ENCODE measurements at regions of chr10 and their contacts with region 1.

Region 1: DNA sequence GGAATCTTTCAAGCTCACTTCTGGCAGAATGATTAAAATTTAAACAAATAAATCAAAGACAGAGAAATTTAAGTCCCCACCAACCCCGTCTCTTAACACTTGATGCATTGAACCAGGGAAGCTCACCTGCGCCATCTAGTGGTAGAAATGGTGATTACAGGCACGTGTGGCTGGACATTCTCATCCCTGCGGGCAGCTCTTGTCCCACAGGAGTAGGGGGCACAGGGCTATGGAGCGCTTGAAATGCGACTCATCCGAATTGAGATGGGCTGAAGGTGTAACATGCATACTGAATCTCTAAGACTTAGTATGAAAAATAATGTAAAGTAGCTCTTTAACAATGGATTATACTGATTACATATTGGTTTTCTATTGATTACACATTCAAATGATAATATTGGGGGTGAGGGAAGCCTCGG is 24.8 kb upstream of the SLIT1 start:
- DNase-seq: peak; percentile 86
- H3K4me3 ChIP-seq: no peak overlapping the region; a peak in 1 of 4 replicates
- H3K27ac ChIP-seq: no peak overlapping the region
- H3K4me1 ChIP-seq: no peaks in the 10 kb centered on the region
- H3K27me3 ChIP-seq: no peaks in the 10 kb centered on the region
- CTCF ChIP-seq: peak; percentile 97
- EP300 ChIP-seq: no peak
- RAD21 ChIP-seq: peak; percentile 94

Region 2: DNA sequence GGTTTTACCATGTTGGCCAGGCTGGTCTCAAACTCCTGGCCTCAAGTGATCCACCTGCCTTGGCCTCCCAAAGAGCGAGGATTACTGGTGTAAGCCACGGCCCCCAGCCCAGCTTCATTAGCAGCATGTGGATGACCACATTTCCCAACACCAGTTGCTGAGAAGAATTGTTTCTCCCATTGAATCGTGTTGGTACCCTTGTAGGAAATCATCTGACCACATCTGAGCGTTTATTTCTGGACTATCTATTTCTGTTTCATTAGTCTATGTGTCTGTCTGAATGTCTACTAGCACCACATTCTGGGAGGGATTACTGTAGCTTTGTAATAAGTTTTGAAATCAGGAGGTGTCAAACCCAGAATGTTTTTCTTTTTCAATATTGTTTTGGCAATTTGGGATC is 288.9 kb before region 1 on chr10:
- CTCF ChIA-PET with region 1: no interaction called
- POLR2A ChIA-PET with region 1: no interaction called
- DNase-seq: no peak
- H3K4me3 ChIP-seq: no peak overlapping the region
- H3K27ac ChIP-seq: no peak overlapping the region
- H3K4me1 ChIP-seq: peaks cover 0 to 5% of the 10 kb centered on the region in 2 experiments; a peak in 1 of 4 replicates
- H3K27me3 ChIP-seq: no peaks in the 10 kb centered on the region
- CTCF ChIP-seq: no peak
- EP300 ChIP-seq: no peak
- RAD21 ChIP-seq: no peak

Region 3: DNA sequence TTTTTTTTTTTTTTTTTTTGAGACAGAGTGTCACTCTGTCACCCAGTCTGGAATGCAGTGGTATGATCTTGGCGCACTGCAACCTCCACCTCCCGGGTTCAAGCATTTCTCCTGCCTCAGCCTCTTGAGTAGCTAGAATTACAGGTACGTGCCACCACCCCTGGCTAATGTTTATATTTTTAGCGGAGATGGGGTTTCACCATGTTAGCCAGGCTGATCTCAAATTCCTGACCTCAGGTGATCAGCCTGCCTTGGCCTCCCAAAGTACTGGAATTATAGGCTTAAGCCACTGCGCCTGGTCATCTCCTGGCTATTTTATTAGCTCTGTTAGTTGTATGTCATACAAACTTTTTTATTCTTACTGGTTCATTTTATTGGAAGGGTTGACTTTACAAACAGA is 275.4 kb before region 1 on chr10:
- CTCF ChIA-PET with region 1: no interaction called
- POLR2A ChIA-PET with region 1: no interaction called
- DNase-seq: no peak
- H3K4me3 ChIP-seq: no peak overlapping the region
- H3K27ac ChIP-seq: no peak overlapping the region
- H3K4me1 ChIP-seq: no peaks in the 10 kb centered on the region
- H3K27me3 ChIP-seq: no peaks in the 10 kb centered on the region
- CTCF ChIP-seq: no peak
- EP300 ChIP-seq: no peak
- RAD21 ChIP-seq: no peak

Region 4: GRCh38 chr10:97037365-97038361 is 172.9 kb before region 1 on chr10:
- CTCF ChIA-PET with region 1: interaction called, 184 read pairs
- POLR2A ChIA-PET with region 1: no interaction called
- DNase-seq: peak; percentile 89
- H3K4me3 ChIP-seq: peak overlapping the region in 1 of 2 experiments; percentile 20; a peak in 1 of 4 replicates
- H3K27ac ChIP-seq: no peak overlapping the region
- H3K4me1 ChIP-seq: peaks cover 0 to 4% of the 10 kb centered on the region in 2 experiments; a peak in 1 of 4 replicates
- H3K27me3 ChIP-seq: no peaks in the 10 kb centered on the region
- CTCF ChIP-seq: peak; percentile 81
- EP300 ChIP-seq: no peak
- RAD21 ChIP-seq: peak; percentile 87

Region 5: DNA sequence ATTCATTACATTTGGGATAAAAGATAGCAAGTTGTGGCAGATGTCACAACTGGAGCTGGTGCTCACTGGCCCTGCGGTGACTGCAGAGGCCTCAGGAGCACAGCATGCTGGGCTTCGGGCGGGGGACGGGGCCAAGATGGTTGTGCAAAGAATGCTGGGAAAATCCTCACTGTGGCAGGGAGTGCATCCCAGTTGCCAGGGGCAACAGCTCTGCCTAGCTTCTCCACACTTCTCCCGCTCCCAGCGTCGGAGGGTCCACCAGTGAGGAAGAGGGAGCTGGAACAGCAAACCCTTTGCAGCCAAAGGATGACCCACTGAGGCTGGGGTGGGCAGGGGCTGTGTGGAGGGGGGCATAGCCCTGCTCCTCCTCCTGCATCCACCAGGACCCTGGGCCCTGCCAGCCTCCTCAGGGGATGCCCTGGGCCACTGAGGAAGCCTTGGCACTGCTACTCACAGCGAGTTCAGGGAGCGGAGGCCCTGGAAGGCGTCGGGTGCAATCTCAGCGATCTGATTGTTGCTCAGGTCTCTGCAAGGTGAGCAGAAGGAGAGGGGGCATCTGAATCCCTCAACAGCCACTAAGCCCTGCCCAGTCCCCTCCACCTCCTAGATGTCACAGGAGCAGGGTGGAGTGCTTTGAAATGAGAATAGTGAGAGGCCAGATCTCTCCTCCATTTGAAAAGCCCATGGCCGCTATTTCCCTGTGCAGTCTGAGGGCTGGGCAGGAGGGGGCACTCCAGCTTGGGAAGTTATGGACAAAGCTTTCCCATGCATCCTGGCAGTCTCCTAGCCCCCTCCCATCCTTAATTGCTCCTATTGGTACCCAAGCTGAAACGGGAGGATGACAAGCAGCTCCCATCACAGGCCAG is 151.3 kb before region 1 on chr10:
- CTCF ChIA-PET with region 1: interaction called, 894 read pairs
- POLR2A ChIA-PET with region 1: no interaction called
- DNase-seq: peak; percentile 54
- H3K4me3 ChIP-seq: no peak overlapping the region
- H3K27ac ChIP-seq: no peak overlapping the region
- H3K4me1 ChIP-seq: peaks cover 0 to 5% of the 10 kb centered on the region in 2 experiments; a peak in 1 of 4 replicates
- H3K27me3 ChIP-seq: no peaks in the 10 kb centered on the region; the same call in 1 of the 2 replicates
- CTCF ChIP-seq: no peak
- EP300 ChIP-seq: no peak
- RAD21 ChIP-seq: 0 out of 2 replicates have a peak, but pooled peaks have one; percentile 10

Region 6: DNA sequence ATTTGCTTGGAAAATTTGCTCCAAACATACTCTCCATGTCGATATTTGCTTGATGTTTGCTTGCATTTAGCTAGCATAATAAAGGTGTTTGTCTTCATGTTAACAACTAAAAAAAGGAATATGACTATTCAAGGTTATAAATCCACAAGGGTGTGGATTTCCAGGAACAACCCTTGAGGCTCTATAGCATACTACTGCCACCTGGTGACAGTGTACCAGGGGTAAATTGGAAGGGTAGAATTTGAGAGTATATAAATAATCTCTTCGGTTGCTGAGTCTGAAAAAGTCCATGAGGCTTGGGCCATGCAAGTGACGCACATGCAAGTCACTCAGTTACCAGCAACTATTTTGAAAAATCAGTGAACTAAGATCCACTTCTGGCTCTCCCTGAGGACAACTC is 93.2 kb before region 1 on chr10:
- CTCF ChIA-PET with region 1: interaction called, 12 read pairs
- POLR2A ChIA-PET with region 1: no interaction called
- DNase-seq: no peak
- H3K4me3 ChIP-seq: no peak overlapping the region
- H3K27ac ChIP-seq: no peak overlapping the region
- H3K4me1 ChIP-seq: peaks cover 0 to 13% of the 10 kb centered on the region in 2 experiments; a peak in 1 of 4 replicates
- H3K27me3 ChIP-seq: peaks cover 3% of the 10 kb centered on the region; the same call in 1 of the 2 replicates
- CTCF ChIP-seq: no peak
- EP300 ChIP-seq: no peak
- RAD21 ChIP-seq: peak; percentile 37; the same call in 1 of the 2 replicates

Region 7: DNA sequence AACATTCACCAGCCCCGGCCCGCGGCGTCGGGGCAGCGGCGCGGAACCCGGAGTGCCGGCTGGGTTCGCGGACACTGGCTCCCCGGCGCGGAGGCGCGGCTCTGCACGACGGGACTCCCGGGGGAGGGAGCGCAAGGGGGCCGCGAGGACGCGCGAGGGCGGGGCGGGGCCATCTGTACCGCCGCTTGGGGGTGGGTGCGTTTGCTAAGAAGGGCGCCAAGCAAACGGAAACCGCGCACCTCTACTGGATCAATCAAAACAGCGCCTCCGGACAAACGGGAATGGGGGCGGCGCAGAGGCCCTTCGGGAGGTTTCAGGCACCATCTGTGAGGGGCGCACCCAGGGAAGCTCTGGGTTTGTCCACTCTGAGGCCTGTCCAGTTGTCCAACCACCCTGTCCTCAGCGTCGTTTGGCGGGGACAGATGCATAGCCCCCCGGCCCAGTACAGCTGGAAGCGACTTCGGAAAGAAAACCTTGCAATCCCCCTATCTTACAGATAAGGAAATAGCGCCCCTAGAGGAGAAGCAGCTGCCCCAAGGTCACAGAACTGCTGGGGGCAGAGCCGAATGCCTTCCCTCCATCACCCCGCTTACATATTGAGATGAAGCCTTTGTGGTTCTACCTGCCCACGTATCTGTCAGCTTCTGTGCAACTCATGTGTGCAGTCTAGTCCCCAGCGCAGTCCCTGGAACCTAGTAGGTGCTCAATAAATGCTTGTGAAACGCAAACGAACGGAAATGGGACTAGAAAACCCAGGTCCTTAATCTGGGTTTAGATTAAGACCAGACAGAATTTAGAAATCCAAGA is 14.1 kb before region 1 on chr10:
- CTCF ChIA-PET with region 1: interaction called, 460 read pairs
- POLR2A ChIA-PET with region 1: no interaction called
- DNase-seq: peak; percentile 90
- H3K4me3 ChIP-seq: peak overlapping the region; percentile 51 to 64
- H3K27ac ChIP-seq: no peak overlapping the region
- H3K4me1 ChIP-seq: peaks cover 0 to 5% of the 10 kb centered on the region in 2 experiments; a peak in 1 of 4 replicates
- H3K27me3 ChIP-seq: peaks cover 10% of the 10 kb centered on the region
- CTCF ChIP-seq: peak; percentile 79
- EP300 ChIP-seq: no peak
- RAD21 ChIP-seq: peak; percentile 64

Region 8: DNA sequence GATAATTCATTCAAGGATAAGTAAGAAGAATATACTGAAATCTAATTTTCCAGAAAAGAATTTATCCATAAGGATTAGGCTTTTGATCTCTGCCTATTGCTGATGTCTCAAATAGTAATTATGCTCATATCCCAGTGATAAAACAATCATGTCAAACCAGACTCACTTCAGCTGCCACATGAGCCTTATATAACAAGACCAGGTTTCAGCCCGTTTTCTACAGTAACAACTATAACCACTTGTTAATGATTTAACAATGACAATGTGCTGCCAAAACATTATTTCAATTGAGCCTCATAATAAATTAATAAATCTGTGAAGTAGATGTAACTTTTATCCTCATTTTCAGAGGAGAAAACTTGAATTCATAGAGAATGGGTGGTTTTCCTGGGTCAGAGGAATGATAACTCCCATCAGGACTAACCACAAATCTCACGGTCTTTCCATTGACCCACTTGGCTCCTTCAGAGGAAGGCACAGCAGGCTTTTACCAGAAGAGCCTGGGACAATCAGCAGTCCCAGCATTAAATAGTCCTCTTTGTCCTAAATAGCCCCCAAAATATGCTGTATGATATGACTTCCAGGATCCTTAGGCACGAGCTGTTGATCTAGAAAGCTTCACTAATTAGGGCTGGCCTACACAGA is 17.7 kb after region 1 on chr10:
- CTCF ChIA-PET with region 1: interaction called, 52 read pairs
- POLR2A ChIA-PET with region 1: interaction called, 3 read pairs
- DNase-seq: no peak
- H3K4me3 ChIP-seq: no peak overlapping the region
- H3K27ac ChIP-seq: no peak overlapping the region
- H3K4me1 ChIP-seq: peaks cover 0 to 4% of the 10 kb centered on the region in 2 experiments; a peak in 1 of 4 replicates
- H3K27me3 ChIP-seq: no peaks in the 10 kb centered on the region
- CTCF ChIP-seq: no peak
- EP300 ChIP-seq: no peak
- RAD21 ChIP-seq: no peak

Measured in SK-N-SH (cell line).